CD8-positive, alpha-beta T cell (primary cell): ENCODE measurements at regions of chr6 and their contacts with region 1.

Region 1: DNA sequence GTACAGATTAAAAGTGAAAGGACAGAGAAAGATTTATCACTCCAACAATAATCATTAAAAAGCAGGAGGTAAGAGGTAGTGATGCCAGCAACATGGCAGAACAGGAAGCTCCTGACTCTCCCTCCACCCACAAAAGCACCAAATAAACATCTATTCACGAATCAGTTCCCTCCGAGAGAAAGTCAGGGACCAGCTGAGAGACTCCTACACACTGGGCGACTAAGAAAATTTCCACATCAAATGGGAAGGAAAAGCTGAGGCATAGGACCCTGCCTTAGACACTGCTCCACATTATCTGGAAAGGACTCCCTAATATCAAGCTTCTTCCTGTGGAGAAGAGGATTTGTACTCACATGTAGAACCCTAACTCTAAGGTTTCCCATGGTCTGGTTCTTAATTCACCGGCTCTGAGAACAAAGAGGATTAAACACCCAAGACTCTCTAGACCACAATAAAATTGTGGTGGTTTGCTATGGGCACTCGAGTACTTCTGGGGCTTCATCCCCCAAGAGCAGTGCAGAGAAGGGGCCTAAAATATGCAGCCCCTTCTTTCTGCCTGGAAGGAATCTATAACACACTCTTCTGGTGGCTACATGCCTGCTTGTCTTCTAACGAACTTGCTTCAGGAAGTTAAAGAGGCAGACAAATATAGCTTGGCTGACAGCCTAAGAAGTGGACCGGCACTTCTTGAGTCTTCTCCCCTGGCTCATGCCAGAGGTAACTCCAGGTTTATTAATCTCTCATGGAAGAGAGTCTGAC is 29.4 kb upstream of the ASF1A start:
- DNase-seq: no peak
- ATAC-seq: no peak
- H3K4me3 ChIP-seq: peak overlapping the region in 1 of 2 experiments; percentile 17
- H3K4me3 Mint-ChIP-seq: peak overlapping the region; percentile 77
- H3K27ac ChIP-seq: peak overlapping the region in 1 of 2 experiments; percentile 22
- H3K27ac Mint-ChIP-seq: peak overlapping the region; percentile 83
- H3K4me1 ChIP-seq: peaks cover 10% of the 10 kb centered on the region
- H3K4me1 Mint-ChIP-seq: peaks cover 56% of the 10 kb centered on the region
- H3K27me3 ChIP-seq: no peaks in the 10 kb centered on the region
- H3K27me3 Mint-ChIP-seq: no peaks in the 10 kb centered on the region
- CTCF ChIP-seq: no peak

Region 2: GRCh38 chr6:118810420-118811027 is 54.0 kb before region 1 on chr6:
- CTCF ChIA-PET with region 1: no interaction called
- POLR2A ChIA-PET with region 1: no interaction called
- intact Hi-C with region 1: loop called in 1 of 2 experiments (anchors 5 kb)
- DNase-seq: peak; percentile 28 to 90 (median 74)
- ATAC-seq: peak; percentile 95
- H3K4me3 ChIP-seq: peak overlapping the region in 1 of 2 experiments; percentile 15
- H3K4me3 Mint-ChIP-seq: peak overlapping the region; percentile 55
- H3K27ac ChIP-seq: peak overlapping the region; percentile 42 to 80
- H3K27ac Mint-ChIP-seq: peak overlapping the region; percentile 87
- H3K4me1 ChIP-seq: peaks cover 28% of the 10 kb centered on the region
- H3K4me1 Mint-ChIP-seq: peaks cover 55% of the 10 kb centered on the region
- H3K27me3 ChIP-seq: no peaks in the 10 kb centered on the region
- H3K27me3 Mint-ChIP-seq: no peaks in the 10 kb centered on the region
- CTCF ChIP-seq: no peak

Region 3: GRCh38 chr6:118881440-118882313 is 17.2 kb after region 1 on chr6:
- CTCF ChIA-PET with region 1: no interaction called
- POLR2A ChIA-PET with region 1: no interaction called
- intact Hi-C with region 1: loop called in 1 of 2 experiments (anchors 2 kb)
- DNase-seq: no peak
- ATAC-seq: no peak
- H3K4me3 ChIP-seq: no peak overlapping the region
- H3K4me3 Mint-ChIP-seq: peak overlapping the region; percentile 27
- H3K27ac ChIP-seq: no peak overlapping the region
- H3K27ac Mint-ChIP-seq: no peak overlapping the region
- H3K4me1 ChIP-seq: peaks cover 23% of the 10 kb centered on the region
- H3K4me1 Mint-ChIP-seq: peaks cover 72% of the 10 kb centered on the region
- H3K27me3 ChIP-seq: no peaks in the 10 kb centered on the region
- H3K27me3 Mint-ChIP-seq: no peaks in the 10 kb centered on the region
- CTCF ChIP-seq: no peak

Region 4: GRCh38 chr6:119313937-119314884 is 449.7 kb after region 1 on chr6:
- CTCF ChIA-PET with region 1: no interaction called
- POLR2A ChIA-PET with region 1: no interaction called
- intact Hi-C with region 1: no loop called
- DNase-seq: peak in 6 of 9 experiments; percentile 28 to 84 (median 60)
- ATAC-seq: peak; percentile 74
- H3K4me3 ChIP-seq: peak overlapping the region; percentile 2 to 7
- H3K4me3 Mint-ChIP-seq: peak overlapping the region; percentile 57
- H3K27ac ChIP-seq: peak overlapping the region; percentile 37 to 88
- H3K27ac Mint-ChIP-seq: peak overlapping the region; percentile 89
- H3K4me1 ChIP-seq: peaks cover 36% of the 10 kb centered on the region
- H3K4me1 Mint-ChIP-seq: peaks cover 60% of the 10 kb centered on the region
- H3K27me3 ChIP-seq: no peaks in the 10 kb centered on the region
- H3K27me3 Mint-ChIP-seq: no peaks in the 10 kb centered on the region
- CTCF ChIP-seq: no peak

Region 5: DNA sequence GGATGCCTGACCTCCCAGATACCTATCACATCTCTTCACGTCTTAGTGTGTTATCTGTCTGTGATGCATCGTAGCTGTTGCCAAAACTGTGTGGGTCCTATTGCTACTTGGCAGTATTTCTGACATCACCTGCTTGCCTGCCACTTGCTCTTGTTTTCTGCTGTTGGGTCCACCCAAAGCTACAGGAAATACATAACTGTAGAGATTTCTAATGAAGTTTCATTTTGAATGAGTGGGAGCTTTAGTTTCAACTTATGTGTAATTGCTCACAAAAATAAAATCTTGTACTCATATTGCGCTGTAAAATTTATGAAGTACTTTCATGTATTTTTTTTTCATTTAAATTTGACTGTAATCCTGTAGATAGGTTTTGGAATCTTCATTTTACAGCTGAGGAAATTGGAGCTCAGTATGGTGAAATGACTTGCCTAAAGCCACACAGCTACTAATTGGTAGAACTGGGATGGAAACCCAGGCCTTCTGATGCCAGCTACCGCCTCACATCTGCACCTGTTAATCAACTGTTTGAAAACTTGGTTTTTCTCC is 598.6 kb after region 1 on chr6:
- CTCF ChIA-PET with region 1: no interaction called
- POLR2A ChIA-PET with region 1: no interaction called
- intact Hi-C with region 1: no loop called
- DNase-seq: peak in 2 of 9 experiments; percentile 2 to 7
- ATAC-seq: no peak
- H3K4me3 ChIP-seq: no peak overlapping the region
- H3K4me3 Mint-ChIP-seq: no peak overlapping the region
- H3K27ac ChIP-seq: no peak overlapping the region
- H3K27ac Mint-ChIP-seq: no peak overlapping the region
- H3K4me1 ChIP-seq: no peaks in the 10 kb centered on the region
- H3K4me1 Mint-ChIP-seq: peaks cover 10% of the 10 kb centered on the region
- H3K27me3 ChIP-seq: no peaks in the 10 kb centered on the region
- H3K27me3 Mint-ChIP-seq: no peaks in the 10 kb centered on the region
- CTCF ChIP-seq: no peak